ENCODE measurements at regions of chr4 and their contacts with region 1.

Region 1: GRCh38 chr4:76213415-76214176 is at the start of gene SCARB2:
- DNase-seq: peak; percentile 83
- H3K4me3 Mint-ChIP-seq: peak within 1 kb of the TSS; percentile 74
- H3K27ac Mint-ChIP-seq: peak within 1 kb of the TSS; percentile 78
- H3K4me1 Mint-ChIP-seq: peaks cover 50% of the 10 kb centered on the region
- H3K27me3 Mint-ChIP-seq: no peaks in the 10 kb centered on the region
- CTCF ChIP-seq: no peak
- total RNA-seq, gene SCARB2: 67.2 and 71.4 TPM in 2 replicates

Region 2: DNA sequence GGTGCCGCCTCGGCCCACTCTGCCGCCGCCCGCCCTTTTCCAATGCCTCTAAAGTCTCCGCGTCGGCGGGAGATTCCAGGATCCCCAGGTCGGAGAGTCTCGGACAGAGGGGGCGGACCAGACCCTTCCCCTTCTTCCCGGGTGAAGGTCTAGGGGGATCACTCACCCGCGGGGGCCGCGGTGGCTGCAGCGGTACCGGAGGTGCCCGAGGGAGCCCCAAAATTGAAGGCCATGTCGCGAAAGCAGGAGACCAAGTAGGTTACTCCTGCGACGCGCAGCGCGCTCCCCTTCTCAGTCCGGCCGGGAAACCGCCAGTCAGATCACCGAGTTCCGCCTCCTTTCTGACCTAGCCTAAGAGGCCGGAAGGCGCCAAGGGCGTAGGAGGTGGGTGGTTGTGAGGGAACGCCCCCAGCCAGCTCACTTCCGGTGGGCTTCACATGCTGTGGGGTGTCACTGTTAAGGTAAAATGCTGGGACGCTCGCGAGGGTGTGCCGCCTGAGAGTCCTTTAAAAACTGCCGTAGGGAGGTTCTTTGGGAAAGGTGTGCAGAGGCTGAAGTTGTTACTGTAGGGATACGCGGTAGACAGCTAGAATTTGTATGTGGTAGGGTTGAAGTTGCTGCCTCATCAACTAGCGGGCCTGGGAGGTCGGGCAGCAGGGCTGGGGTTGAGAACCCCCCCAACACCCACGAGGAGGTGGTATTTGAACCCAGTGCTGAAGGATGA is 65.3 kb before region 1 on chr4 and contains the start of gene NUP54:
- CTCF ChIA-PET with region 1: no interaction called
- POLR2A ChIA-PET with region 1: interaction called, 13 read pairs
- intact Hi-C with region 1: no loop called
- DNase-seq: peak; percentile 94
- H3K4me3 Mint-ChIP-seq: peak within 1 kb of the TSS; percentile 98
- H3K27ac Mint-ChIP-seq: peak within 1 kb of the TSS; percentile 98
- H3K4me1 Mint-ChIP-seq: peaks cover 12% of the 10 kb centered on the region
- H3K27me3 Mint-ChIP-seq: no peaks in the 10 kb centered on the region
- CTCF ChIP-seq: no peak
- total RNA-seq, gene NUP54: 46.9 and 51.5 TPM in 2 replicates

Region 3: DNA sequence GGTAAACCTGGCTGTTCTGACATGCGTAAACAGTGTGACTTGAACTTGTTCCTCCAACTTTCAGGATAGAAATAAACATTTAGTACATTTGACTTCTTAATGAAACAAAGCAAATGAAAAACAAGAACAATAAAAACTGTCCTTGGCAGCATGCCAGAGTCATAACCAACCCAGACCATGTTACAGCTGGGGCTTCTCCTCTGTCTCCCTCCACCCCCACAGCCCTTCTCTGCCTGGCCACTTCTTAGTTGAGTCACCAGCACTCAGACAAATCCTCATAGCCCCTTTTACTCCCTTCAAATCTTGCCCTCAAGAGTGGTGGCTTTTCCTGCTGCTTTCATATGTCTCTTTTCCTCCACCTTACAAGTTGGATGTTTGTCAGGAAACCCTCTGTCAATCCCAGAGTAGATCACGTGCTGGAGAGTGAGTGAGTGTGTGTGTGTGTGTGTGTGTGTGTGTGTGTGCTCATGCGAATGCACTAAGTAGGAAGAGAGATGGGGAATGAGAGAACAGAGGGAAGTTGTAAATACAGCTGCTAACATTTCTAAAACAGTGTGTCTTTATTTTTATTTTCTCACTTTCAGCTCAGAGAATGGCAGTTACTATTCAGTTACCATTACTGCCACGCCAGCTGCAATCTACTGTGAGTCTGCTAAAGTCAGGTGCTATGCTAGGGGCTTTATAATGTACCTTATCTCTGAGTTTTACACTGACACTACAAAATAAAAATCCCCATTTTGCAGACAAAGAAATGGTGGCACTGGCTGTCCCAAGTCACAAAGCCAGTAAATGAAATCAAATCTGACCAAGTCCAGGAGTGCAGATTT is 15.0 kb before region 1 on chr4:
- CTCF ChIA-PET with region 1: interaction called, 3 read pairs
- POLR2A ChIA-PET with region 1: interaction called, 90 read pairs
- intact Hi-C with region 1: loop called (anchors 1 kb)
- DNase-seq: peak; percentile 73
- H3K4me3 Mint-ChIP-seq: peak overlapping the region; percentile 17
- H3K27ac Mint-ChIP-seq: peak overlapping the region; percentile 94
- H3K4me1 Mint-ChIP-seq: peaks cover 36% of the 10 kb centered on the region
- H3K27me3 Mint-ChIP-seq: no peaks in the 10 kb centered on the region
- CTCF ChIP-seq: no peak

Region 4: DNA sequence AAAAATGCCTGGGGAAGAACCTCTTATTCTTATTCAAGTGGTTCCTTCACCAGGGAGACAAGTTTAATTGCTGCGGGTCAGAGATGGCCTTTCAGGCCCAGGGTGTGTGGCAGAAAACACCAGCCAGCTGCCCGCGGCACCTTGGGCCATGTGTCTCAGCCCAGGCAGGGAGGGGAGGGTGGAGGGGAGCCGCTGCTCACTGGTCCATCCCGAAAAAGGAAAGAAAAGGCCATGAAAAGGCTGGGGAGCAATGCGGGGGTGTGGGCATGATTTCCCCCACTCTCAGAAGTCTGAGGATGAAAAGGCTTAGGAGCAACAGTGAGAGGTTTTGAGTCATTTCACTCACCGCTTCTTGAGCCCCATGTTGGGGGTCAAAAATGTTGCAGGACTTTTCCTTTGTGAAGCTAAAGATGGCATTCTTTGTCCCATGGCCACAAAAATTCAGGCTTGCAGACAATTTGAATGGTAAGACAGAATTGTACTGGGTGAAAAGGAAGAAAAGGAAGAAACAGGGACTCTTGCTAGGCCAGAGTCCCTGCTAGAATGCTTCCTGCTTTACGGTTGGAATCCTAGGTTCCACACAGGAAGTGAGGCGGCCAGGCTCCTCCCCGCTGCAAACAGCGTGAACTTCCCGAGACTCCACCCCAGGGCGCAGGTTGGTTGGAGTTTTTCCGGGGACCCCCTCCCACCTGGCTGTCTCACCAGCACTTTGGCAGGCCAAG is 20.5 kb after region 1 on chr4:
- CTCF ChIA-PET with region 1: no interaction called
- POLR2A ChIA-PET with region 1: interaction called, 69 read pairs
- intact Hi-C with region 1: no loop called
- DNase-seq: no peak
- H3K4me3 Mint-ChIP-seq: no peak overlapping the region
- H3K27ac Mint-ChIP-seq: peak overlapping the region; percentile 83
- H3K4me1 Mint-ChIP-seq: peaks cover 46% of the 10 kb centered on the region
- H3K27me3 Mint-ChIP-seq: no peaks in the 10 kb centered on the region
- CTCF ChIP-seq: no peak

Region 5: GRCh38 chr4:76251441-76252270 is 38.1 kb after region 1 on chr4 and contains the start of gene FAM47E:
- CTCF ChIA-PET with region 1: interaction called, 4 read pairs
- POLR2A ChIA-PET with region 1: interaction called, 4 read pairs
- intact Hi-C with region 1: loop called (anchors 1 kb)
- DNase-seq: peak; percentile 45
- H3K4me3 Mint-ChIP-seq: peak within 1 kb of the TSS; percentile 70
- H3K27ac Mint-ChIP-seq: peak within 1 kb of the TSS; percentile 7
- H3K4me1 Mint-ChIP-seq: no peaks in the 10 kb centered on the region
- H3K27me3 Mint-ChIP-seq: peaks cover 47% of the 10 kb centered on the region
- CTCF ChIP-seq: peak; percentile 47
- total RNA-seq, gene FAM47E: 1.0 TPM in 2 replicates

Region 6: GRCh38 chr4:76301068-76301774 is 87.6 kb after region 1 on chr4:
- CTCF ChIA-PET with region 1: interaction called, 6 read pairs
- POLR2A ChIA-PET with region 1: interaction called, 76 read pairs
- intact Hi-C with region 1: loop called (anchors 5 kb)
- DNase-seq: peak; percentile 89
- H3K4me3 Mint-ChIP-seq: no peak overlapping the region
- H3K27ac Mint-ChIP-seq: peak overlapping the region; percentile 54
- H3K4me1 Mint-ChIP-seq: peaks cover 40% of the 10 kb centered on the region
- H3K27me3 Mint-ChIP-seq: no peaks in the 10 kb centered on the region
- CTCF ChIP-seq: no peak